Activated CD8-positive, alpha-beta T cell treated with anti-CD3 and anti-CD28 coated beads for 36 hours (primary cell): ENCODE measurements at regions of chr11 and their contacts with region 1.

Region 1: DNA sequence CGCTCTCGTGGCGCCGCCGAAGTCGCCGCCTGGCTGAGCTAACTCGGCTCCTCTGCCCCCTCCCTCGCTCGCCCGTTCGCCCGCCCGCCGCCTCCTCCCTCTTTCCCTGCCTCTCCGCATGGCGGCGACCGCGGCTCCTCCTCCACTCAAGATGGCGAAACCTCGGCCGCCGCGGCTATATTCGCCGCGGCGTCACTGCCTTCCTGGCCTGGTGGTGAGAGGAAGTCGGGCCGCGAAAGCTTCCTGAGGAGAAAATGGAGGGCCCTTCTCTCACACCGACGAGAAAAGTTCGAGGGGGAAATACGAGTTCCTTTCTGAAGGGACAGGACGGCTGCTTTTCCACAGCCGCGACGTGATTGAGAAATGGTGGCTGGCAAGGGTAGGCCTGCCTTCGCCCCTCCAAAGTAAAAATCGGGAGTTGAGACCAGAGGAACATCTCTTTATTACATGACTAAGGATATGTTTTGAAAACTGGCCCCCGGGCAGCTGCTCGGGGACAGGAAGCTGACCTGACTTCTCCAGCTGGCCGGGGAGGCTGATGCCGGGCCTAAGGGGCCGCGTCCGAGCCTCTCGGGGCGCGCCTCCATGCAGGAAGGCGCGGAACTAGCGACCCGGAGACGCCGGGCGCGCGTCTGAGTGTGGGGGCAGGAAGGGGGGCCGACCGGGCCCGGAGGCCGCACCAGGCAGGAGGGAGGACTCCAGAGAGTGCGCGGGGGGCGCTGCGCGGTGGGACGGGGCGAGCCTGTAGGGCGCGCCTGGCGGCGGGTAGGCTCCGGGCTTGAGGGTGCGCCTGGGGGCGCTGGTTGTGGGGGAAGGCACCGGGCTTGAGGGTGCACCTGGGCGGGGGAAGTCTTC is at the start of gene DDX6:
- DNase-seq: peak; percentile 94
- ATAC-seq: peak; percentile 55
- H3K4me3 Mint-ChIP-seq: peak within 1 kb of the TSS; percentile 99
- H3K27ac Mint-ChIP-seq: peak within 1 kb of the TSS; percentile 100
- H3K4me1 Mint-ChIP-seq: peaks cover 17% of the 10 kb centered on the region
- H3K27me3 Mint-ChIP-seq: no peaks in the 10 kb centered on the region
- CTCF ChIP-seq: no peak
- total RNA-seq, gene DDX6: 155 to 158 TPM

Region 2: DNA sequence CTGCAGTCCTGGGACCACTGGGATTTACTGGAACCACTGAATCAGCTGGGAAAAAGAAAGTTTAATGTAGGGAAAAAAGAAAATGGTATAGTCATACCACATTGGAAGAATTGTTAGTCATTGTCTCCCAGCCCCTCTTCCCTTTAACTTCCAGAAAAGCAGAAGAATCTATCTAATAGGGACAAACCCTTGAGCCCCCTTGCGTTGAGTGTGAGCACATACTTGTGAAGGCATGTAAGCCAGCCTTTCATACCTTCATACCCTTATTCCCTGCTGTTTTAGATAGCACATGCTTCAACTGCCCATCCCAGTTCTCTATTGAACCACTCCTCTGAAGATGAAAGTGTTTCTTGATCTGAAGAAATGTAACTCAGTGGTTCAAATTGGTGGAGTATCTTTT is 118.5 kb before region 1 on chr11:
- CTCF ChIA-PET with region 1: no interaction called
- POLR2A ChIA-PET with region 1: no interaction called
- intact Hi-C with region 1: no loop called
- DNase-seq: no peak
- ATAC-seq: no peak
- H3K4me3 Mint-ChIP-seq: no peak overlapping the region
- H3K27ac Mint-ChIP-seq: no peak overlapping the region
- H3K4me1 Mint-ChIP-seq: no peaks in the 10 kb centered on the region
- H3K27me3 Mint-ChIP-seq: no peaks in the 10 kb centered on the region
- CTCF ChIP-seq: no peak

Region 3: GRCh38 chr11:118699506-118700220 is 91.7 kb before region 1 on chr11:
- CTCF ChIA-PET with region 1: interaction called, 4 read pairs
- POLR2A ChIA-PET with region 1: interaction called, 14 read pairs
- intact Hi-C with region 1: loop called (anchors 5 kb)
- DNase-seq: peak; percentile 67
- ATAC-seq: peak; percentile 47
- H3K4me3 Mint-ChIP-seq: no peak overlapping the region
- H3K27ac Mint-ChIP-seq: peak overlapping the region; percentile 80
- H3K4me1 Mint-ChIP-seq: peaks cover 46% of the 10 kb centered on the region
- H3K27me3 Mint-ChIP-seq: no peaks in the 10 kb centered on the region
- CTCF ChIP-seq: no peak

Region 4: GRCh38 chr11:118804094-118804493 is 12.8 kb after region 1 on chr11:
- CTCF ChIA-PET with region 1: interaction called, 6 read pairs
- POLR2A ChIA-PET with region 1: interaction called, 11 read pairs
- intact Hi-C with region 1: no loop called
- DNase-seq: no peak
- ATAC-seq: no peak
- H3K4me3 Mint-ChIP-seq: no peak overlapping the region
- H3K27ac Mint-ChIP-seq: no peak overlapping the region
- H3K4me1 Mint-ChIP-seq: peaks cover 10% of the 10 kb centered on the region
- H3K27me3 Mint-ChIP-seq: no peaks in the 10 kb centered on the region
- CTCF ChIP-seq: no peak

Region 5: GRCh38 chr11:118870396-118871345 is 79.3 kb after region 1 on chr11:
- CTCF ChIA-PET with region 1: interaction called, 15 read pairs
- POLR2A ChIA-PET with region 1: interaction called, 40 read pairs
- intact Hi-C with region 1: loop called (anchors 5 kb)
- DNase-seq: peak; percentile 58
- ATAC-seq: peak; percentile 47
- H3K4me3 Mint-ChIP-seq: peak overlapping the region; percentile 80
- H3K27ac Mint-ChIP-seq: peak overlapping the region; percentile 99
- H3K4me1 Mint-ChIP-seq: peaks cover 58% of the 10 kb centered on the region
- H3K27me3 Mint-ChIP-seq: no peaks in the 10 kb centered on the region
- CTCF ChIP-seq: no peak

Region 6: GRCh38 chr11:118878163-118878563 is 86.8 kb after region 1 on chr11:
- CTCF ChIA-PET with region 1: interaction called, 28 read pairs
- POLR2A ChIA-PET with region 1: interaction called, 41 read pairs
- intact Hi-C with region 1: loop called (anchors 5 kb)
- DNase-seq: peak; percentile 47
- ATAC-seq: peak; percentile 12
- H3K4me3 Mint-ChIP-seq: no peak overlapping the region
- H3K27ac Mint-ChIP-seq: peak overlapping the region; percentile 98
- H3K4me1 Mint-ChIP-seq: peaks cover 87% of the 10 kb centered on the region
- H3K27me3 Mint-ChIP-seq: no peaks in the 10 kb centered on the region
- CTCF ChIP-seq: no peak

Region 7: GRCh38 chr11:118895142-118896039 is 104.1 kb after region 1 on chr11:
- CTCF ChIA-PET with region 1: interaction called, 18 read pairs
- POLR2A ChIA-PET with region 1: interaction called, 54 read pairs
- intact Hi-C with region 1: no loop called
- DNase-seq: peak; percentile 88
- ATAC-seq: peak; percentile 86
- H3K4me3 Mint-ChIP-seq: peak overlapping the region; percentile 67
- H3K27ac Mint-ChIP-seq: peak overlapping the region; percentile 95
- H3K4me1 Mint-ChIP-seq: peaks cover 74% of the 10 kb centered on the region
- H3K27me3 Mint-ChIP-seq: no peaks in the 10 kb centered on the region
- CTCF ChIP-seq: no peak

Region 8: GRCh38 chr11:118907051-118908042 is 116.0 kb after region 1 on chr11:
- CTCF ChIA-PET with region 1: interaction called, 17 read pairs
- POLR2A ChIA-PET with region 1: interaction called, 24 read pairs
- intact Hi-C with region 1: no loop called
- DNase-seq: peak; percentile 92
- ATAC-seq: peak; percentile 61
- H3K4me3 Mint-ChIP-seq: no peak overlapping the region
- H3K27ac Mint-ChIP-seq: peak overlapping the region; percentile 85
- H3K4me1 Mint-ChIP-seq: peaks cover 46% of the 10 kb centered on the region
- H3K27me3 Mint-ChIP-seq: no peaks in the 10 kb centered on the region
- CTCF ChIP-seq: peak; percentile 86